Activated CD4-positive, alpha-beta memory T cell treated with anti-CD3 and anti-CD28 coated beads, Interleukin-2, amount 10 ng/mL, durations not matched to agents 7 days and 5 days (primary cell): ENCODE measurements at regions of chr1 and their contacts with region 1.

Region 1: DNA sequence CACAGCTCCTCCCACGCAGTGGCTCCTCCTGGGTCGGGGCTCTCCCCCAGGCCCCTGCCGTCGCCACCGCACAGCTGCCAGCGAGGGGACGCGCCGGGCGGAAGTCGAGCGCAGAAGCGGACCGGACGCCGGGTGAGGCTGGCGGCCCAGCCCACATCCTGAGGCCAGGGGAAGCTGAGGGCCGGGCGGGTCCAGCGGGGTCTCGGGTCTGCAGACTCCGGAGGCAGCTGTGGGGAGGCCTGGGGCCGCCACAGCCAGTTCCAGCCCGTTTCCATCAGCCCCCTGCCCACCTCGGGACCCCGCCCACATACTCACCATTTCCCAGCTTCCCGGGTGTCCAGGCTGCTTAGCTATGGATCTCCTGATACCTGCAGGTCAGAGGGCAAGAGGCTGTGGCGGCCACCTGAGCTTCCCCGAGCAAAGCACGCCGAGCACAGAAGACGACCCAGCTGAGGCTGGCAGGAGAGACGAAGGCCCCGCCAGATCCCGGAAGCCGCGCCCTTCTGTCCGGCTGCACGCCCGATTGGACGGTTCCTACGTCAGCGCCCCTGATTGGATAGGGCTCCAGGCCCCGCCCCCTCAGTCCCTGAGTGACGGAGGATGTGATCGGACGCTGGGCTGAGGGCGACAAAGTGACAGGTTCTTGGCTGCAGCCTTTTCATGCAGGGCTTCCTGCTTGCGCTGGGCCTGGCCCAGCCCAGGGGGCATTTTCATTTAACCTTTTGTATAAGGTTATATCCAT is 38.7 kb upstream of the ZNF124 start:
- DNase-seq: peak; percentile 97
- H3K4me3 Mint-ChIP-seq: peak overlapping the region; percentile 92
- H3K27ac Mint-ChIP-seq: peak overlapping the region; percentile 95
- H3K4me1 Mint-ChIP-seq: peaks cover 66% of the 10 kb centered on the region
- H3K27me3 Mint-ChIP-seq: no peaks in the 10 kb centered on the region

Region 2: DNA sequence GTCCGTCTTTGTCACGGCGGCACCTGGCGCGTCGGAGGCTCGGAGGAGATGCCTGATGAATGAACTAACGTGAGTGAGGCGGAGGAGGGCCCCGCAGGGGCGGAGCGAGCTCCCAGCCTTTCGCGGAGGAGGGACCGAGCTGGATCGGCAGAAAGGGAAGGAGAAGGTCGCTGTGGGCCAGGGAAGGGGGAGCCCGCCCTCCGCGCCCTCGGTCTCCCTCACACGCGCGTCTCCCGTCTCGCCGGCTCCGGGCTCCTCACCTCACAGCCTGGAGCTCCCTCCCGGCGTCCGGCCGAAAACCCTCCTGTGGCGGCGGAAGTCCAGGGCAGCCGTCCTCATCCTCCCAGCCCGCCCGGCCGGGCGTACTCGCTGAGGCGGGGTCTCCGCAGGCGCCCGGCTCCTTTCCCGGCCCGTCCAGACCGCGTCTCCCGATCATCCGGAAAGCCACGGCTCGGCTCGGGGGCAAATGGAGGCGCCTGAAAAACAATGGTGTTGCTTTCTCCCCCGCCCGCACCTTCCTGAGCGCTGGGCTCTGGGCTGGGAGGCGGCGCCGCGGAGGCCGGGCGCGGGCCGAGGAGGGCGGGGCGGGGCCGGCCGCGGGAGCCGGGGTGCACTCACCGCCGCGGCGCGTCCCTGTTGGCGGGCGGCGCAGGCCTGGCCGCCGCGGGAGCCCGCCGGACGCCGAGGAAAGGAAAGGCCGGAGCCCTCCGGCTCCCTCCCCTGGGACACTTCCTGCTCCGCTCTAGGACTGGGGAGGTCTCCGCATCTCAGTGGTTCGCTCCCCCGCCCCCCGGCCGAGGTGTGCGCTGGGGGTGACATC is 120.8 kb after region 1 on chr1 and contains the start of gene ZNF496:
- CTCF ChIA-PET with region 1: interaction called, 3 read pairs
- POLR2A ChIA-PET with region 1: interaction called, 10 read pairs
- DNase-seq: peak; percentile 72
- H3K4me3 Mint-ChIP-seq: peak within 1 kb of the TSS; percentile 90
- H3K27ac Mint-ChIP-seq: peak within 1 kb of the TSS; percentile 69
- H3K4me1 Mint-ChIP-seq: peaks cover 11% of the 10 kb centered on the region
- H3K27me3 Mint-ChIP-seq: no peaks in the 10 kb centered on the region
- total RNA-seq, gene ZNF496: 6.4 to 6.5 TPM